Dorsolateral prefrontal cortex (tissue), 120 donors: ENCODE measurements at regions of chrX and their contacts with region 1.

Region 1: GRCh38 chrX:123184219-123184857 is at the start of gene GRIA3:
- DNase-seq: peak in 5 of 10 donors; percentile 13 to 55 (median 33)
- H3K4me3 ChIP-seq: peak within 1 kb of the TSS; percentile 30 to 74 (median 58)
- H3K27ac ChIP-seq: peak within 1 kb of the TSS in 52 of 59 donors; percentile 9 to 86 (median 74)
- H3K27me3 ChIP-seq: peaks cover 0 to 56% (median 9%) of the 10 kb centered on the region in 45 donors
- CTCF ChIP-seq: no peak
- total RNA-seq, gene GRIA3: 44.8 to 176 (median 130) TPM

Region 2: GRCh38 chrX:123267220-123267619 is 82.9 kb after region 1 on chrX:
- intact Hi-C with region 1: loop called in 1 of 2 experiments (anchors 10 kb)
- DNase-seq: peak in 1 of 10 donors; percentile 43
- H3K4me3 ChIP-seq: no peak overlapping the region
- H3K27ac ChIP-seq: peak overlapping the region in 4 of 59 donors; percentile 8 to 61 (median 37)
- H3K27me3 ChIP-seq: peaks cover 0 to 53% (median 4%) of the 10 kb centered on the region in 45 donors
- CTCF ChIP-seq: no peak

Region 3: GRCh38 chrX:123422877-123423276 is 238.5 kb after region 1 on chrX:
- intact Hi-C with region 1: loop called in 1 of 2 experiments (anchors 10 kb)
- DNase-seq: peak in 4 of 10 donors; percentile 10 to 42 (median 28)
- H3K4me3 ChIP-seq: no peak overlapping the region
- H3K27ac ChIP-seq: no peak overlapping the region
- H3K27me3 ChIP-seq: peaks cover 0 to 62% (median 2%) of the 10 kb centered on the region in 45 donors
- CTCF ChIP-seq: peak in 54 of 56 donors; percentile 37 to 73 (median 58)